GM18951 (cell line): ENCODE measurements at regions of chr11 and their contacts with region 1.

Region 1: DNA sequence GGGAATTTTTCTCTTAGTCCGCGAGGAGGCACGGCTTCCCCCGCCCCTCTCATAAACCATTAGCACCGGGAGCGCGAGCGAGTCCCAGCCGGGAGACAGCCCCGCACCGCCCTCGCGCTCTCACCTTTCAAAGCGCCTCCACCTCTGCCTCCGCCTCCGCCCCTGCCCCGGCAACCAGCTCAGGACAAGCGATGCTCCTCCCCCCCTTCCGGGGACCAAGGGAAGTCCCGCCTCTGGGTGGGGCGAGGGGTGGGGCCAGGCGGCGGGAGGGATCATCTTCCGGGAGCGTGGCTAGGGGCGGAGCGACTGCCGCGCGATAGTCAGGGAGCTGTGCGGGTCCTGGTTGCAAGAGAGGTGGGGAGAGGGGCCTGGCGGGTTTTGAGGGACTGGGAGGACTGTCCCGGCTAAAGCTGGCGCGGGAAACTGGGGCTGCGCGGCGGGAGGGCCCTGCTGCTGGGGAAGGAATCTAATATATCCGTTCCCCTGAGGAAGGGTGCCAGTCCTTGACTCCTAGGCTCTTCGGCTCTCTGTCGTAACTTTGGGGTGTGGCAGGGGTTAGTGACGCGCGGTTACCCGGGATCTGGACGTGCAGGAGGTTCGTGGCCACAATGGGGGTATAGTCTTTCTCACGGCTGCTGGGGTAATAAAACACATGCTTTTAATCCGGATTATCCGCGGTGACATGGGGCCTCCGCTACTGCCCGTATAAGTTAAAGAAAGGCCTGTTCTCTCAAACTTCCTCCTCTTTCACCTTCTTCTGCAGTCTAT is at the starts of genes CCDC82 and JRKL:
- POLR2A ChIP-seq: peak; percentile 80

Region 2: GRCh38 chr11:95835768-95836488 is 554.0 kb before region 1 on chr11:
- in situ Hi-C with region 1: loop called (anchors 25 kb)
- POLR2A ChIP-seq: no peak

Region 3: GRCh38 chr11:96012086-96012824 is 377.6 kb before region 1 on chr11:
- in situ Hi-C with region 1: loop called (anchors 25 kb)
- POLR2A ChIP-seq: no peak

Region 4: GRCh38 chr11:96741068-96741467 is 351.2 kb after region 1 on chr11:
- in situ Hi-C with region 1: no loop called
- POLR2A ChIP-seq: no peak